ENCODE measurements at regions of chr7 and their contacts with region 1.

Region 1: DNA sequence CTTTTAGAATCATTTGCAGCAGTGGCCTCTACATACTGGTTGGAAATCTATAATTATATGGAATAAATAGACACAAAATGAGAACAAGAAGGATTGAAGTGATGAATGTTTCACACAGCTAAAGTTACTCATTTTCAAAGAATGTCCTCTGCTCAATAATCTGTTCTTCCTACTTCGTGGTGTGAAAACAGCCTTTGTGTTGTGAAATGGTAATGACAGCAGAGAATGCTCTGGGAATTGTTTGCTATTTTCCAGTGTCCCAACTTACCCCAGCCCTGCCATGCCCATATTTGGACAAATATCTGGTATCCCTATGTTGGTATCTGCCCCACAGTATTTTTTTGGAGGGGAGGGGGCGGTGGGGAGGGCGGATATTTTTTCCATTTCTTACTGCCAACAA is 130.4 kb downstream of the GLI3 start:
- DNase-seq: peak; percentile 32
- H3K4me3 ChIP-seq: no peak overlapping the region
- H3K27ac ChIP-seq: peak overlapping the region; percentile 79
- H3K4me1 ChIP-seq: peaks cover 53% of the 10 kb centered on the region
- H3K27me3 ChIP-seq: no peaks in the 10 kb centered on the region
- CTCF ChIP-seq: no peak

Region 2: GRCh38 chr7:40836218-40836617 is 1270.3 kb before region 1 on chr7:
- CTCF ChIA-PET with region 1: no interaction called
- POLR2A ChIA-PET with region 1: no interaction called
- intact Hi-C with region 1: no loop called
- DNase-seq: no peak
- H3K4me3 ChIP-seq: no peak overlapping the region
- H3K27ac ChIP-seq: no peak overlapping the region
- H3K4me1 ChIP-seq: no peaks in the 10 kb centered on the region
- H3K27me3 ChIP-seq: no peaks in the 10 kb centered on the region
- CTCF ChIP-seq: no peak

Region 3: DNA sequence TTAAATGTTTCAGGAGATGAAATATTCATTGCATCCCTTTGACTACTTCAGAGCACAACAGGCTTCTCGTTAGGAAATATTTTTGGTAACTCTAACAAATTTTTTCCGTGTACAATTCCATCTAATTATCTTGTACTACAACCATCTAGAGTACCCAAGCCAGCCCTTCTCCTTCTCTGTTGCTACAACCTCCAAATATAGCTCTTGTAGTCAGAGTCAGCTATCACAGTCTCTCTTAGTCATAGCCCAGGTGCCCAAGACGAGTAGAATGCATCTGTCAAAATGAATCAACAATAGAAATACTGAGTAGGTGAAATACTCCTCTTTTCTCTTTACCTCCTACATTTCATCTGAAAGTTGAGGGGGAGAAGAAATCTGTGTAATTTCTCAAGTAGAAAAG is 477.7 kb before region 1 on chr7:
- CTCF ChIA-PET with region 1: no interaction called
- POLR2A ChIA-PET with region 1: no interaction called
- intact Hi-C with region 1: no loop called
- DNase-seq: no peak
- H3K4me3 ChIP-seq: no peak overlapping the region
- H3K27ac ChIP-seq: no peak overlapping the region
- H3K4me1 ChIP-seq: no peaks in the 10 kb centered on the region
- H3K27me3 ChIP-seq: no peaks in the 10 kb centered on the region
- CTCF ChIP-seq: no peak

Region 4: GRCh38 chr7:42186212-42186611 is 79.7 kb after region 1 on chr7:
- CTCF ChIA-PET with region 1: no interaction called
- POLR2A ChIA-PET with region 1: interaction called, 11 read pairs
- intact Hi-C with region 1: no loop called
- DNase-seq: peak; percentile 30
- H3K4me3 ChIP-seq: no peak overlapping the region
- H3K27ac ChIP-seq: no peak overlapping the region
- H3K4me1 ChIP-seq: peaks cover 36% of the 10 kb centered on the region
- H3K27me3 ChIP-seq: no peaks in the 10 kb centered on the region
- CTCF ChIP-seq: peak; percentile 76